ENCODE measurements at regions of chr17 and their contacts with region 1.

Region 1: GRCh38 chr17:46154151-46154816 is 38.9 kb downstream of the KANSL1 start:
- DNase-seq: peak; percentile 63
- ATAC-seq: peak; percentile 92
- H3K4me3 ChIP-seq: no peak overlapping the region
- H3K27ac ChIP-seq: peak overlapping the region; percentile 12; the same call in 1 of the 2 replicates
- H3K4me1 ChIP-seq: peaks cover 22% of the 10 kb centered on the region
- H3K27me3 ChIP-seq: no peaks in the 10 kb centered on the region
- CTCF ChIP-seq: no peak

Region 2: GRCh38 chr17:46072998-46073397 is 81.3 kb before region 1 on chr17:
- CTCF ChIA-PET with region 1: no interaction called
- POLR2A ChIA-PET with region 1: no interaction called
- intact Hi-C with region 1: loop called (anchors 5 kb)
- DNase-seq: peak; percentile 60
- ATAC-seq: peak; percentile 70
- H3K4me3 ChIP-seq: no peak overlapping the region
- H3K27ac ChIP-seq: no peak overlapping the region
- H3K4me1 ChIP-seq: 0 out of 2 replicates have a peak, but pooled peaks cover 14% of the 10 kb centered on the region
- H3K27me3 ChIP-seq: no peaks in the 10 kb centered on the region
- CTCF ChIP-seq: no peak

Region 3: DNA sequence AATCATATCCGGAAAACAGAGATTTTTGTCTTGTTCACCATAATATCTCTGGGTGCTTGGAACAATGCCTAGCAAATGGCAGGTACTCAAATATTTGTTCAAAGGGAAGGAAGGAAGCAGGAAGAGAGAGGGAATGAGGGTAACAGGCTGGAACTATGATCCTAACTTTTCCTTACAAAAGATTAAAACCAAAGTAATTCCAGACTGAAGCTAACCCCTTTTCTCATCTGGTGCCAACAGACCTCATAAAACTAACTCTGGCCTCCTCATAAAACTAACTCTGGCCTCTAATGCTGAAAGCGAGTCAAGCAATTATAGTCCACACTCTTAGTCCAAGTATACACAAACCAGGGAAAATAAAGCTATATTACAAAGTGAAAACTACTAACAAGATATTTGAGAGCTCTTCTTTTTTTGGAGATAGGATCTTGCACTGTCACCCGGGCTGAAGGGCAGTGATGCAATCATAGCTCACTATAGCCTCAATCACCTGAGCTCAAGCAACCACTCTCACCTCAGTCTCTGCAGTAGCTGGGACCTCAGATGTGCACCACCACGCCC is 45.7 kb before region 1 on chr17:
- CTCF ChIA-PET with region 1: no interaction called
- POLR2A ChIA-PET with region 1: no interaction called
- intact Hi-C with region 1: loop called (anchors 5 kb)
- DNase-seq: peak; percentile 57
- ATAC-seq: peak; percentile 63
- H3K4me3 ChIP-seq: peak overlapping the region; percentile 6; the same call in 1 of the 2 replicates
- H3K27ac ChIP-seq: peak overlapping the region; percentile 38
- H3K4me1 ChIP-seq: peaks cover 31% of the 10 kb centered on the region
- H3K27me3 ChIP-seq: no peaks in the 10 kb centered on the region
- CTCF ChIP-seq: no peak

Region 4: GRCh38 chr17:46167826-46168569 is 13.7 kb after region 1 on chr17:
- CTCF ChIA-PET with region 1: no interaction called
- POLR2A ChIA-PET with region 1: interaction called, 10 read pairs
- intact Hi-C with region 1: no loop called
- DNase-seq: peak; percentile 65
- ATAC-seq: peak; percentile 77
- H3K4me3 ChIP-seq: no peak overlapping the region
- H3K27ac ChIP-seq: no peak overlapping the region
- H3K4me1 ChIP-seq: peaks cover 20% of the 10 kb centered on the region
- H3K27me3 ChIP-seq: no peaks in the 10 kb centered on the region
- CTCF ChIP-seq: no peak

Measured in PC-3 (cell line).